Activated CD8-positive, alpha-beta T cell treated with anti-CD3 and anti-CD28 coated beads, Interleukin-2, amount 10 ng/mL, durations not matched to agents 7 days and 5 days (primary cell): ENCODE measurements at regions of chr10 and their contacts with region 1.

Region 1: DNA sequence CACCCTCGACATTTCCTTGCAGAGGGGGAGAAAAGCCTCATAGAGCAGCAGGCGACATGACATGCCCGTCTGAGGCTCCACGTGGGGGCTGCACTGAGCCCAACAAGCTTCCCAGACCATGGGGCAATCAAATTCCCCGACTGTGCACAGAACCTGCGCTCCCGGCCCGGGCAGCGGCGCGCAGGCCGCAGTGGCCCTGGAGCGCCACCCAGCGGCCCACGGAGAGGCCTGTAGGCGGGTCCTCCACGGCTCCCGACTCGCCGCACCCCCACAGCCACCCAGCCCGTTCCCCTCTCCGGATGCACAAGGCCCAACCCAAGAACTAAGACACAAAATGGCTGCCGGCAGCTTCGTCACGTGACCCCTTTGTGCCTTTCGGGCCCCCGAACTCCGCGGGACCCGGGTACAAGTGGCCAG is 816 bp downstream of the EPC1 start:
- DNase-seq: peak; percentile 97
- ATAC-seq: peak; percentile 90
- H3K4me3 Mint-ChIP-seq: peak overlapping the region; percentile 92
- H3K27ac Mint-ChIP-seq: peak overlapping the region; percentile 100
- H3K4me1 Mint-ChIP-seq: peaks cover 61% of the 10 kb centered on the region
- H3K27me3 Mint-ChIP-seq: no peaks in the 10 kb centered on the region

Region 2: GRCh38 chr10:32232378-32232777 is 113.8 kb before region 1 on chr10:
- CTCF ChIA-PET with region 1: no interaction called
- POLR2A ChIA-PET with region 1: no interaction called
- DNase-seq: no peak
- ATAC-seq: no peak
- H3K4me3 Mint-ChIP-seq: no peak overlapping the region
- H3K27ac Mint-ChIP-seq: no peak overlapping the region
- H3K4me1 Mint-ChIP-seq: no peaks in the 10 kb centered on the region
- H3K27me3 Mint-ChIP-seq: no peaks in the 10 kb centered on the region

Region 3: DNA sequence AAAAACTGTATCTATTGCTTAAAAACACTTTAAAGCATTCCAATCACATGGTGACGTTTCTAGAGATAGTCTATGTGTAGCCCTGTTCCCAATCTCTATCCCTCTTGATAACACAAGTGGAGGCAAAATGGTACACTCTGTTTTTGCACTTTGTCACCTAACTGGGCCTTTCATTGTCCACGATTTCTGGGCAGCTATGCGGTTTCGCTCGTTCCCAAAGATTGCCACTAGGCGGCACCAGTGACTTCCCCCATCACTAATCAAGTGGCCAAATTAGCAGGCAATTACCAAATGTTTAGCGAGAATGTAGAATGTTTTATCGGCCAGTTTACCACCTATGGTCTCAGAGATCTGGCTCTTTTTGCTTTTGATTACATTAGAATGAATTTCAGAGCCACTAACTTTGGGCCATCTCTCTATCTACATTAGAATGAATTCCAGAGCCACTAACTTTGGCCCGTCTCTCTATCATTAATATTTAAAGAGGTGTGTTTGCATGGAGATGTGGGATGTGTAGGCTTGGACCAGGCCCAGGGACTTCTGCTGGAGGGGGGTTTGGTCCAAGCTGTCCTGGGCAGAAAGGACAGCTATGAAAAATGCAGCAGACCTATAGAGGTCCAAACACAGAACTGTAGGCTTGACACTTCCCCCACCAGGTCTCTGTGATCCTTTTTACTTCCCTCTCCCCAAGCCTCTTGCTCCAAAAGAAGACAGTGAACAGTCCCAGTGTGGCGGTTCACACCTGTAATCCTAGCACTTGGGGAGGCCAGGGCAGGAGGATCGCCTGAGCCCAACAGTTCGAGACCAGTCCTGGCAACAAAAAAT is 89.3 kb before region 1 on chr10:
- CTCF ChIA-PET with region 1: interaction called, 63 read pairs
- POLR2A ChIA-PET with region 1: interaction called, 4 read pairs
- DNase-seq: peak; percentile 78
- ATAC-seq: peak; percentile 76
- H3K4me3 Mint-ChIP-seq: no peak overlapping the region
- H3K27ac Mint-ChIP-seq: no peak overlapping the region
- H3K4me1 Mint-ChIP-seq: peaks cover 7% of the 10 kb centered on the region
- H3K27me3 Mint-ChIP-seq: no peaks in the 10 kb centered on the region

Region 4: GRCh38 chr10:32332299-32332750 is 13.8 kb before region 1 on chr10:
- CTCF ChIA-PET with region 1: interaction called, 19 read pairs
- POLR2A ChIA-PET with region 1: interaction called, 13 read pairs
- DNase-seq: peak; percentile 82
- ATAC-seq: peak; percentile 99
- H3K4me3 Mint-ChIP-seq: peak overlapping the region; percentile 35
- H3K27ac Mint-ChIP-seq: peak overlapping the region; percentile 83
- H3K4me1 Mint-ChIP-seq: peaks cover 75% of the 10 kb centered on the region
- H3K27me3 Mint-ChIP-seq: no peaks in the 10 kb centered on the region

Region 5: GRCh38 chr10:32357056-32357735 is 11.1 kb after region 1 on chr10:
- CTCF ChIA-PET with region 1: interaction called, 11 read pairs
- POLR2A ChIA-PET with region 1: interaction called, 22 read pairs
- DNase-seq: peak; percentile 63
- ATAC-seq: peak; percentile 78
- H3K4me3 Mint-ChIP-seq: peak overlapping the region; percentile 64
- H3K27ac Mint-ChIP-seq: peak overlapping the region; percentile 94
- H3K4me1 Mint-ChIP-seq: peaks cover 72% of the 10 kb centered on the region
- H3K27me3 Mint-ChIP-seq: no peaks in the 10 kb centered on the region

Region 6: GRCh38 chr10:32367793-32368453 is 21.8 kb after region 1 on chr10:
- CTCF ChIA-PET with region 1: interaction called, 14 read pairs
- POLR2A ChIA-PET with region 1: interaction called, 3 read pairs
- DNase-seq: peak; percentile 81
- ATAC-seq: peak; percentile 50
- H3K4me3 Mint-ChIP-seq: peak overlapping the region; percentile 31
- H3K27ac Mint-ChIP-seq: peak overlapping the region; percentile 39
- H3K4me1 Mint-ChIP-seq: peaks cover 39% of the 10 kb centered on the region
- H3K27me3 Mint-ChIP-seq: no peaks in the 10 kb centered on the region

Region 7: GRCh38 chr10:32378363-32379317 is 32.5 kb after region 1 on chr10:
- CTCF ChIA-PET with region 1: interaction called, 3 read pairs
- POLR2A ChIA-PET with region 1: interaction called, 20 read pairs
- DNase-seq: peak; percentile 96
- ATAC-seq: peak; percentile 99
- H3K4me3 Mint-ChIP-seq: no peak overlapping the region
- H3K27ac Mint-ChIP-seq: no peak overlapping the region
- H3K4me1 Mint-ChIP-seq: peaks cover 18% of the 10 kb centered on the region
- H3K27me3 Mint-ChIP-seq: no peaks in the 10 kb centered on the region

Region 8: GRCh38 chr10:32437334-32437733 is 91.2 kb after region 1 on chr10:
- CTCF ChIA-PET with region 1: no interaction called
- POLR2A ChIA-PET with region 1: no interaction called
- DNase-seq: no peak
- ATAC-seq: no peak
- H3K4me3 Mint-ChIP-seq: no peak overlapping the region
- H3K27ac Mint-ChIP-seq: no peak overlapping the region
- H3K4me1 Mint-ChIP-seq: no peaks in the 10 kb centered on the region
- H3K27me3 Mint-ChIP-seq: peaks cover 3% of the 10 kb centered on the region